Pancreas (tissue), 10 donors: ENCODE measurements at regions of chr3 and their contacts with region 1.

Region 1: DNA sequence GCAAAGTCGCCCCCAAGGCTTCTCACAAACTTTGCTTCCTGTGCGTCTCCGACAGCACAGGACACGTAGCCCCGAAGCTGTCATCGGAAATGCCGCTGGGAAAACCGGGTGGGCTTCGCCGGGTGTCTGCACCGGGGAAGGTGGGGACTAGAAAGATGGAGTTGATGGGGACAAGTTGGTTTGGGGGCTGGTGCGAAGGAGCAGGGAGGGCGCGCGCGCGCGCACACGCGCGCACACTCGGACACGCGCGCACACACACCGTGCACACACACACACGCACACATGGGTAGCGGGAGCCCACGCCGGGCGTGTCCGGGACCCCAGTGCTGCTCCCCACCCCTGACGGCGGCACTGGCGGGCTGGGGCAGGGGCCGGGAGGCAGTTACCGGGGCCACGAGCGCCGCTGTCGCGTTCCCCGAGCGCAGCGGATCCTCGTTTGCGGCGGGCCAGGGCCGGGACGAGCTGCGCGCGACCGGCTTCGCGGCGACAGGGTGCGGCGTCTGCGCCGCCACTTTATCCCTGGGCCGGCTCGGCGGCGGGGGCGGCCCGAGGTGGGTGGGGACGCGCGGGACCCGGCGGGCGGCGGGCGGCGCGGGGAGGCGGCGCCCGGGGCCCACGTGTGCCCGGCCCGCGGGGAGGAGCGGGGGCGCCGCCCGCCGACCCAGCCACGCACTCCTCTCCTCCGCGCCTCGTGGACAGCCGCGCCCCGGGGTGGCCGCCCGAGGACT is 547 bp upstream of the MGLL start:
- DNase-seq: peak in 4 of 6 donors; percentile 12 to 72 (median 28)
- ATAC-seq: peak; percentile 49 to 68 (median 66)
- H3K4me3 ChIP-seq: peak overlapping the region; percentile 29 to 65 (median 45)
- H3K27ac ChIP-seq: no peak overlapping the region
- H3K4me1 ChIP-seq: peaks cover 0 to 5% (median 0%) of the 10 kb centered on the region in 3 donors
- H3K27me3 ChIP-seq: no peaks in the 10 kb centered on the region
- CTCF ChIP-seq: no peak

Region 2: GRCh38 chr3:127667119-127667681 is 155.7 kb before region 1 on chr3:
- intact Hi-C with region 1: loop called in 1 of 3 experiments (anchors 10 kb)
- DNase-seq: no peak
- ATAC-seq: no peak
- H3K4me3 ChIP-seq: no peak overlapping the region
- H3K27ac ChIP-seq: no peak overlapping the region
- H3K4me1 ChIP-seq: peaks cover 0 to 6% (median 4%) of the 10 kb centered on the region in 3 donors
- H3K27me3 ChIP-seq: no peaks in the 10 kb centered on the region
- CTCF ChIP-seq: no peak